Breast epithelium (tissue), 4 donors: ENCODE measurements at regions of chr2 and their contacts with region 1.

Region 1: DNA sequence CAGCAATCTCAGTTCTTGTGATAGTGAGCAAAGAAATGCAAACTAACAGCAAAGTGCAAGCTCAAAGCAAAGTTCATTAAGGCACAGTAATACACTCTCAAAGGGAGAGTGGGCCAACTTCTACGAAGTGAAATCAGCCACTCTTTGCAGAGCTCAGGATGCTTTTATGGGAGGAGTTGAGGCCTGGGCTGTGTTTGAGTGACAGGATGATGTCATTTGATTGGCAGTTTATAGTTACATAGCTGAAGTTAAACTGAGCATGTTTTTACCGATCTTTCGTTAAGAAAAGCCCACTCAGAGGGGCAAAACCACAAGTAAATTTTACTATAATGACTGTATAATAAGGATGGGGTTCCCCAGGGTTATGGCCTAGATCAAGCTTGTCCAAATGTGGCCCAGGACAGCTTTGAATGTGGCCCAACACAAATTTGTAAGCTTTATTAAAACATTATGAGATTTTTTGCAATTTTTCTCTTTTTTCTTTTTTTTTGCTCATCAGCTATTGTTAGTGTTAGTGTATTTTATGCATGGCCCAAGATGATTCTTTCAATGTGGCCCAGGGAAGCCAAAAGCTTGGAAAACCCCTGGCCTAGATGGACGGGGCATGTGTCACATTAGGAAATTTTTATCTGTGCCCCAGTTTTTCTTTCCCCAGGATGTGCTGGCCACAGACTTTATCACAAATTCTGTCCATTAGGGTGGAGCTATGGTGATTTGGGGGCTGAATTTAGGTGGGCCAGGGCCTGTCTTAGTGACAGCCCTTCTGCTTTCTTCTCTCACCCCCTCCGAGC is 8.3 kb upstream of the DNAH7 start:
- DNase-seq: no peak
- H3K4me3 ChIP-seq: no peak overlapping the region
- H3K27ac ChIP-seq: peak overlapping the region; percentile 64 to 72
- H3K4me1 ChIP-seq: no peaks in the 10 kb centered on the region
- H3K27me3 ChIP-seq: no peaks in the 10 kb centered on the region
- CTCF ChIP-seq: no peak
- POLR2A ChIP-seq: no peak

Region 2: GRCh38 chr2:194745557-194746146 is 1331.3 kb before region 1 on chr2:
- intact Hi-C with region 1: no loop called
- DNase-seq: no peak
- H3K4me3 ChIP-seq: peak overlapping the region in 1 of 3 donors; percentile 27
- H3K27ac ChIP-seq: no peak overlapping the region
- H3K4me1 ChIP-seq: no peaks in the 10 kb centered on the region
- H3K27me3 ChIP-seq: no peaks in the 10 kb centered on the region
- CTCF ChIP-seq: no peak
- POLR2A ChIP-seq: no peak

Region 3: DNA sequence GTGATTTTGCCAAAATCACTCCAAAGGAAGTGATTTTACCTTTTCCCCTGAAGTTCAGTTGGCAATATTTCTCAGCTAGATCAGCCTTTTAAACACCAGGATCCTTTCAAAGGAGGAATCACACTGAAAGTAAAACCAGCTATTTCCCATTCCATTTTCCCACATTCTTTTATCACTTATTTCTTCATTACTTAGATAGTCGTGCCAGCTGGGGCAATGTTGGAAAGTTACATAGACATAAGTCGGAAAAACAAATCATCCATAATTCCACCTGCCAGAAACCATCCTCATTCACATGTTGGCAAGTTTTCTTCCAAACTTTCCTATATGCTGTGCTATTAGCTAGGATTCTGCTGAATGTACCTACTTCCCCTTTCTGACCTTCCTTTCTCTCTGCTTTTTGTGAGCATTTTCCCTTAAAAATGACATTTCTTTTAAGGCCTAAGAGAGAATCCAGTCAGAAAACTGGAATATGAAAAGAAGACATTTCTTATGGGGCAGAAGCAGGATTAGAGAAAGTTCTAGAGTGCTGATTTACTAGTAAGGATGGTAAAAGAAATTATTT is 264.4 kb after region 1 on chr2:
- intact Hi-C with region 1: loop called (anchors 10 kb)
- DNase-seq: no peak
- H3K4me3 ChIP-seq: no peak overlapping the region
- H3K27ac ChIP-seq: no peak overlapping the region
- H3K4me1 ChIP-seq: no peaks in the 10 kb centered on the region
- H3K27me3 ChIP-seq: no peaks in the 10 kb centered on the region
- CTCF ChIP-seq: no peak
- POLR2A ChIP-seq: no peak